Panc1 (cell line): ENCODE measurements at regions of chr20 and their contacts with region 1.

Region 1: DNA sequence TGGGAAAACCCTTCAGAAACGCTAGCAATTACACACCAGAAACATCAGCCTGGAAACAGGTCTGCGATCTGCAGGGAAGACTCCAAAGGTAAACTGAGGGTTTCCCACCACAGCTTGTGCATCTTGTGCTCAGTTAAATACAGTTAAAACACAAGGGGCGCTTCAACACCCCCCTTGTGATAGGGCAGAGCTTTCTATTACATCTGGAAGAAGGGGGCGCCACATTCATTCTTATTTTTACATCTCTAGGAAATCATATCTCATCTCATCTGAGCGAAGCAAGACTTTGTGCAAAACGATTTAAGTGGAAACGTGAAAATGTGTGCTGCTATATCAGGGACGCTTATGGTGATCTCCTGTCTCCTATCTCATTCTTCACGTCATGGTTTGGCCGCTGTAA is 58.5 kb downstream of the PRND start:
- DNase-seq: no peak
- ATAC-seq: no peak
- H3K4me3 ChIP-seq: no peak overlapping the region
- H3K27ac ChIP-seq: no peak overlapping the region
- H3K4me1 ChIP-seq: no peaks in the 10 kb centered on the region
- H3K27me3 ChIP-seq: peaks cover 15% of the 10 kb centered on the region
- CTCF ChIP-seq: no peak; the same call in 1 of the 2 replicates

Region 2: DNA sequence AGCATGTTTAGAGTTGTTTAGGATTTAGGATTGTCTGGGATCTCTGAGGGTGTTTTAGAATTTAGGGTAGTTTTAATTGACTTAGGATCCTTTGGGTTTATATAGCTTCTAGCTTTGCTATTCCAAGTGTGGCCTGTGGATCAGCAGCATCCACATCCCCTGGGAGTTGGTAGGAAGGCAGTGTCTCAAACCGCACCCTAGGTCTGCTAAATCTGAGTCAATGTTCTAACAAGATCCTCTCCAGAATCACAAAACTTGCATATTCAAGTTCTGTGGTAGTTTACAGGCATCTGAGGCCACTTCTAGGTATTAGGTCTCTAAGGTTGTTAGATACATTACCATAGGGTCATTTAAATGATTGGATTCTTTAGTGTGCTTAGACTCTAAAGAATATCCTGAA is 10.2 kb before region 1 on chr20:
- CTCF ChIA-PET with region 1: no interaction called
- POLR2A ChIA-PET with region 1: interaction called, 10 read pairs
- in situ Hi-C with region 1: no loop called
- intact Hi-C with region 1: no loop called
- DNase-seq: no peak
- ATAC-seq: no peak
- H3K4me3 ChIP-seq: no peak overlapping the region
- H3K27ac ChIP-seq: no peak overlapping the region
- H3K4me1 ChIP-seq: no peaks in the 10 kb centered on the region
- H3K27me3 ChIP-seq: 0 out of 2 replicates have a peak, but pooled peaks cover 4% of the 10 kb centered on the region
- CTCF ChIP-seq: no peak

Region 3: DNA sequence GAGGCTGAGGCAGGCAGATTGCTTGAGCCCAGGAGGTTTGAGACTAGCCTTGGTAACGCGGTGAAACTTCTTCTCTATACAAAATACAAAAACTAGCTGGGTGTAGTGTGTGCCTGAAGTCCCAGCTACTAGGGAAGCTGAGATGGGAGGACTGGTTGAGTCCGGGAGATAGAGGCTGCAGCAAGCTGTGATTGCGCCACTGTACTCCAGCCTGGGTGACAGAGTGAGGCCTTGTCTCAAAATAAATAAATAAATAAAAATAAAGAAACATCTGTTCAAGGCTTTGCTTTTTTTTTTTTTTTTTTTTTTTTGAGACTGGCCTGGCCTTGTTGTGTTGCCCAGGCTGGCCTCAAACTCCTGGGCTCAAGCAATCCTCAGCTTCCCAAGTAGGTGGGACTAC is 244.7 kb after region 1 on chr20:
- CTCF ChIA-PET with region 1: no interaction called
- POLR2A ChIA-PET with region 1: interaction called, 12 read pairs
- in situ Hi-C with region 1: no loop called
- intact Hi-C with region 1: no loop called
- DNase-seq: no peak
- ATAC-seq: no peak
- H3K4me3 ChIP-seq: no peak overlapping the region
- H3K27ac ChIP-seq: no peak overlapping the region
- H3K4me1 ChIP-seq: no peaks in the 10 kb centered on the region
- H3K27me3 ChIP-seq: no peaks in the 10 kb centered on the region
- CTCF ChIP-seq: no peak